B cell (primary cell): ENCODE measurements at regions of chr10 and their contacts with region 1.

Region 1: GRCh38 chr10:63157845-63158624 is 24.9 kb downstream of the NRBF2 start:
- DNase-seq: peak; percentile 85
- ATAC-seq: peak; percentile 68
- H3K4me3 ChIP-seq: no peak overlapping the region
- H3K4me3 Mint-ChIP-seq: no peak overlapping the region
- H3K27ac ChIP-seq: no peak overlapping the region
- H3K27ac Mint-ChIP-seq: no peak overlapping the region
- H3K4me1 ChIP-seq: no peaks in the 10 kb centered on the region
- H3K4me1 Mint-ChIP-seq: peaks cover 9% of the 10 kb centered on the region
- H3K27me3 ChIP-seq: no peaks in the 10 kb centered on the region
- H3K27me3 Mint-ChIP-seq: no peaks in the 10 kb centered on the region
- CTCF ChIP-seq: peak; percentile 90

Region 2: DNA sequence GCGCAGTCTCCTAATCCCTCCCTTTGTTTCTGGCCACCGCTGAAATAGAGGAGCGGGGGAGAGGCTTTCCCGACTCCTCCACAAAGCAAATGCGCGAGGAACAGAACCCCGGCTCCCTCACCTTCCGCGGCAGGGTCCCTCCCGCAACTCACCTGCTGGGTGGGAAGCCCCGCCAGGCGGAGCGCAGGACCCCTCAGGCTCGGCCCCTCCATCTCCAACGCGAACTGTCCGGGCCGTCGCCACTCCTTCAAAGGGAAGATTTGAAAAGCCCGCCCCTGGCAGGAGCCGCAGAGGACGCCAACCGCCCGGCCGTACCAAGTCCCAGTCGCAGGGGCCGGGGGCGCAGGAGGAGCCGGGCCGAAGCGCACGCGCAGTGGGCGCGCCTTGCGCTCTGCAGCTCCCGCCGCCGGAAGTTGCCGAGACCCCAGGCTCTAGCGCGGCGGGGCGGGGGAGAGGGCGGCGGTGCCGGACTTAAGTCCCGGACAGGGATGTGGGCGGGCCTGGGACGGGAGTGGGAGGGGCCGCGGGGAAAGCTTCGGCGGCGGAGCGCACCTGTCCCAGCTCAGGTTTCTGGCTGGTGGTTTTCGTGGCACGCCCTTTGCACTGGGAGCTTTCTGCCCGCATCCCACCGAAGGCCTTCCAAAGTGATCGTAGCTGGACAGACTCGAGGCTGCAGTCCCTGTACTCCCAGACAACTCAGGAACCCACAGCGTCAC is 889.5 kb before region 1 on chr10 and contains the start of gene RTKN2:
- CTCF ChIA-PET with region 1: interaction called, 22 read pairs
- POLR2A ChIA-PET with region 1: no interaction called
- intact Hi-C with region 1: loop called (anchors 1 kb)
- DNase-seq: peak; percentile 81
- ATAC-seq: peak; percentile 90
- H3K4me3 ChIP-seq: peak within 1 kb of the TSS; percentile 51 to 73 (median 68)
- H3K4me3 Mint-ChIP-seq: peak within 1 kb of the TSS; percentile 92
- H3K27ac ChIP-seq: peak within 1 kb of the TSS in 1 of 2 donors; percentile 25
- H3K27ac Mint-ChIP-seq: no peak within 1 kb of the TSS
- H3K4me1 ChIP-seq: peaks cover 14 to 15% of the 10 kb centered on the region in 2 donors
- H3K4me1 Mint-ChIP-seq: peaks cover 11% of the 10 kb centered on the region
- H3K27me3 ChIP-seq: peaks cover 0 to 17% (median 9%) of the 10 kb centered on the region in 4 experiments
- H3K27me3 Mint-ChIP-seq: peaks cover 14% of the 10 kb centered on the region
- CTCF ChIP-seq: no peak
- total RNA-seq, gene RTKN2: 0.22 and 0.53 TPM in 2 replicates

Region 3: GRCh38 chr10:62594093-62594520 is 563.9 kb before region 1 on chr10:
- CTCF ChIA-PET with region 1: interaction called, 21 read pairs
- POLR2A ChIA-PET with region 1: no interaction called
- intact Hi-C with region 1: loop called (anchors 1 kb)
- DNase-seq: peak; percentile 74
- ATAC-seq: peak; percentile 89
- H3K4me3 ChIP-seq: no peak overlapping the region
- H3K4me3 Mint-ChIP-seq: no peak overlapping the region
- H3K27ac ChIP-seq: no peak overlapping the region
- H3K27ac Mint-ChIP-seq: no peak overlapping the region
- H3K4me1 ChIP-seq: peaks cover 7 to 10% of the 10 kb centered on the region in 2 donors
- H3K4me1 Mint-ChIP-seq: peaks cover 7% of the 10 kb centered on the region
- H3K27me3 ChIP-seq: no peaks in the 10 kb centered on the region
- H3K27me3 Mint-ChIP-seq: no peaks in the 10 kb centered on the region
- CTCF ChIP-seq: peak; percentile 88

Region 4: DNA sequence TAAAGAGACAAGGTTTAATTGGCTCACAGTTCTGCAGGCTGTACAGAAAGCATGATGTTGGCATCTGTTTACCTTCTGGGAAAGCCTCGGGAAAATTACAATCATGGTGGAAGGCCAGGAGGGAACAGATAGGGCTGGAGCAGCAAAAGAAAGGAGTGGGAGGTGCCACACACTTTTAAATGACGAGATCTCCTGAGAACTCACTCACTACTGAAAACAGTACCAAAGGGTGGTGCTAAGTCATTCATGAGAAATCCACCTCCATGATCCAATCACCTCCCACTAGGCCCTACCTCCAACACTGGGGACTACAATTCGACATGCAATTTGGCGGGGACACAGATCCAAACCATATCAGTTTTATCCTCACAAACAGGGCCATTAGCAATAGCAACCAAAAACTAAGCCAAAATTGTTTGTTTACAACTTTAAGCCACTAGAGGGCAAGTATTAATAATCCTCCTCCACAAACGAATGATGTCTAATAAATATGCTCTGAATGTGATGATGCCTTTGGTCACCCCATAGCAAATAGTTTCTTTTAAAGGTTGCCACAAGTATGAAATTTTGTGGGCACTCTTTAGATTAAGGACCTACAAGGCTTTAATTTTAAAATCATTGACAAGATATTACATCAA is 154.1 kb before region 1 on chr10:
- CTCF ChIA-PET with region 1: interaction called, 4 read pairs
- POLR2A ChIA-PET with region 1: no interaction called
- intact Hi-C with region 1: loop called (anchors 1 kb)
- DNase-seq: peak; percentile 14
- ATAC-seq: no peak
- H3K4me3 ChIP-seq: no peak overlapping the region
- H3K4me3 Mint-ChIP-seq: no peak overlapping the region
- H3K27ac ChIP-seq: no peak overlapping the region
- H3K27ac Mint-ChIP-seq: no peak overlapping the region
- H3K4me1 ChIP-seq: no peaks in the 10 kb centered on the region
- H3K4me1 Mint-ChIP-seq: no peaks in the 10 kb centered on the region
- H3K27me3 ChIP-seq: no peaks in the 10 kb centered on the region
- H3K27me3 Mint-ChIP-seq: peaks cover 9% of the 10 kb centered on the region
- CTCF ChIP-seq: peak; percentile 60

Region 5: DNA sequence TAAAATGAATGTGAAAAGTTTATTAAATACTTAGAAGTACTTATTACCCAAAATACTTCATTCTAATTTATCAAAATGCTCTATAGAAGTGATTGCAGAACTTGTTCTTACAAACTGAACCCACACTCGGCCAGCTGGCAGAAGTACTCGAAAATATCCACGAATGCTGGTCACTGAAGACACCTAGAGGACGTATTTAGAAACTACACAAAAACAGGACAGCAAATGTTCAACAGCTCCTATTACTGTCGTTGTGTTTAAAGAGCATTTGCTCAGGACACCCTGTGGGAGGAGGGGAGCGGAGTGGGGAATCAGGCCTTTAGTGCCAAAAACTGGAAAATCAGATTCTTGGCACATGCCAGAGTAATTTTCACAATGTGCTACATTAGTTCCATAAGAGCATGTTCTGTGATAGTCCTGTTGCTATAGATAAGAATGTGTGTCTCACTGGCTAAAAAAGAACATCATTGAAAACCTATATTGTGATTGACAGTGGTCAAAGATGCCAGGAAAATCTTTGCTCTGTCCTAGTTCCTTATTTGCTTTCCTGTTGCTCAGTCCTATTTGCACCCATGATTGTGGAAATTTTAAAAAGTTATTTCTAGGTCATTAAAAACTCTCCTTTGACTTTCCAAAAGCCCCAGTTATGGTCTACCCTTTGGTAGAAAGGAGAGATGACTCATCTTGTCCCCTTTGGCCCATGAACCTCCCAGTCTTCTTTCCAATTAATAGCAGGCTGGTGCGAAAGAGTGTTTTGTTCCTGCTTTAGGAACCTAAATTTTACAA is 73.9 kb before region 1 on chr10:
- CTCF ChIA-PET with region 1: interaction called, 27 read pairs
- POLR2A ChIA-PET with region 1: no interaction called
- intact Hi-C with region 1: loop called (anchors 1 kb)
- DNase-seq: peak; percentile 75
- ATAC-seq: peak; percentile 86
- H3K4me3 ChIP-seq: no peak overlapping the region
- H3K4me3 Mint-ChIP-seq: no peak overlapping the region
- H3K27ac ChIP-seq: no peak overlapping the region
- H3K27ac Mint-ChIP-seq: no peak overlapping the region
- H3K4me1 ChIP-seq: no peaks in the 10 kb centered on the region
- H3K4me1 Mint-ChIP-seq: no peaks in the 10 kb centered on the region
- H3K27me3 ChIP-seq: no peaks in the 10 kb centered on the region
- H3K27me3 Mint-ChIP-seq: peaks cover 10% of the 10 kb centered on the region
- CTCF ChIP-seq: peak; percentile 82

Region 6: GRCh38 chr10:63133056-63133820 is 24.8 kb before region 1 on chr10 and contains the start of gene NRBF2:
- CTCF ChIA-PET with region 1: interaction called, 35 read pairs
- POLR2A ChIA-PET with region 1: no interaction called
- intact Hi-C with region 1: no loop called
- DNase-seq: peak; percentile 99
- ATAC-seq: peak; percentile 86
- H3K4me3 ChIP-seq: peak within 1 kb of the TSS; percentile 89 to 100 (median 95)
- H3K4me3 Mint-ChIP-seq: peak within 1 kb of the TSS; percentile 93
- H3K27ac ChIP-seq: peak within 1 kb of the TSS; percentile 99
- H3K27ac Mint-ChIP-seq: peak within 1 kb of the TSS; percentile 97
- H3K4me1 ChIP-seq: peaks cover 26 to 36% of the 10 kb centered on the region in 2 donors
- H3K4me1 Mint-ChIP-seq: peaks cover 43% of the 10 kb centered on the region
- H3K27me3 ChIP-seq: peaks cover 0 to 2% (median 0%) of the 10 kb centered on the region in 4 experiments
- H3K27me3 Mint-ChIP-seq: peaks cover 3% of the 10 kb centered on the region
- CTCF ChIP-seq: peak; percentile 39
- total RNA-seq, gene NRBF2: 20.5 and 24.6 TPM in 2 replicates

Region 7: DNA sequence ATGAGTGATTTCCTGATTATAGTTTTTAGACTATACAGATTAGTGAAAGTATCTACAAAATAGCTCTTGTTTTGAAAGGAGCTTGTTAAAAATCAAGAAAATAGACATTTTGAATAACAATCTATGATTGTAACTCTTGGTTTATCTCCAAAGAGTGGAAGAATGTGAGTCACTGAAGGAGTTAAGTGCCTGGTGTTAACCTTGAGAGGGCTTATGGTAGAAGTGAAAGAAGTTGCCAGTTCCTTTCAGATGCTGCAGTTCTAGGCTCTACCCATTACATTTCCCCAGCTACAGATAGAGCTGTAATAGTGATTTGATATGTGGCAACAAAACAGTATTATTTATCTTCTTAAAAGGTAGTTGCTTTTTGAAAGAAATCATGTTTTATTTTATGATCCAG is 12.3 kb before region 1 on chr10:
- CTCF ChIA-PET with region 1: interaction called, 56 read pairs
- POLR2A ChIA-PET with region 1: no interaction called
- intact Hi-C with region 1: no loop called
- DNase-seq: no peak
- ATAC-seq: no peak
- H3K4me3 ChIP-seq: no peak overlapping the region
- H3K4me3 Mint-ChIP-seq: no peak overlapping the region
- H3K27ac ChIP-seq: no peak overlapping the region
- H3K27ac Mint-ChIP-seq: no peak overlapping the region
- H3K4me1 ChIP-seq: peaks cover 0 to 8% of the 10 kb centered on the region in 2 donors
- H3K4me1 Mint-ChIP-seq: peaks cover 50% of the 10 kb centered on the region
- H3K27me3 ChIP-seq: no peaks in the 10 kb centered on the region
- H3K27me3 Mint-ChIP-seq: no peaks in the 10 kb centered on the region
- CTCF ChIP-seq: no peak

Region 8: DNA sequence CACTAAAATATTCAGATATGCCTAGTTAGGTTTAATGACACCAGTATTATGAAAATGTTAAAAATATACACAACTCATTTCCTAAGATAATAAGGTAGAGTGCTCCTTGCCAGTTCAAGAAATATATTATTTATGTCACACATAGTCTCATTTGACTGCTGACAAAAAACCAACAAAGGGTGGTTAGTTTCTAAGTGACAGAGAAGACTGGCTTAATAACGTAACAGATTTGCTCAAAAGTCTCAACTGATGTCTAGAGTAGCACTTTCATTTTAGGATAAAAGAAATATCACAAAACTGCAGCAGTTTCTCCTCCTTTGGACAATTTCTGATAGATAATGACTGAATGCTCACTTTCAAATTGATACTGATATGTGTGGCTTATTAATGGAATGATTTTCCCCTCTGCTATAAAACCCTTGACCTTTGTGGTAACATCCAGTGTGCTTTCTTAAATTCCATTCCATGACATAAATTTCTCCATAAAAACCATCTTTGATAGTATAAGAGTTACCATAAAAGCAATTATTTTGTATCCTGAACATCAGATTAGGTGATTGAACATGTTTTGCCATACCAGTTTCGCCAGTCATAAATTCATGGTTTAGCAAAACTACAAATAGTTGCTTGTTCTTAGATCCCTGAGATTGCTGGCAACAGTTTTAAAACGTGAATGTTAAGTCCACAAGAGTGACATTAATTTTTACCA is 69.3 kb after region 1 on chr10:
- CTCF ChIA-PET with region 1: no interaction called
- POLR2A ChIA-PET with region 1: no interaction called
- intact Hi-C with region 1: no loop called
- DNase-seq: no peak
- ATAC-seq: no peak
- H3K4me3 ChIP-seq: no peak overlapping the region
- H3K4me3 Mint-ChIP-seq: no peak overlapping the region
- H3K27ac ChIP-seq: peak overlapping the region; percentile 1 to 3
- H3K27ac Mint-ChIP-seq: peak overlapping the region; percentile 65
- H3K4me1 ChIP-seq: peaks cover 18 to 32% of the 10 kb centered on the region in 2 donors
- H3K4me1 Mint-ChIP-seq: peaks cover 65% of the 10 kb centered on the region
- H3K27me3 ChIP-seq: no peaks in the 10 kb centered on the region
- H3K27me3 Mint-ChIP-seq: no peaks in the 10 kb centered on the region
- CTCF ChIP-seq: no peak

Region 9: GRCh38 chr10:63267414-63268148 is 109.5 kb after region 1 on chr10:
- CTCF ChIA-PET with region 1: no interaction called
- POLR2A ChIA-PET with region 1: no interaction called
- intact Hi-C with region 1: no loop called
- DNase-seq: peak; percentile 51
- ATAC-seq: no peak
- H3K4me3 ChIP-seq: peak overlapping the region; percentile 64 to 100 (median 95)
- H3K4me3 Mint-ChIP-seq: peak overlapping the region; percentile 100
- H3K27ac ChIP-seq: peak overlapping the region; percentile 85 to 94
- H3K27ac Mint-ChIP-seq: peak overlapping the region; percentile 86
- H3K4me1 ChIP-seq: peaks cover 3 to 12% of the 10 kb centered on the region in 2 donors
- H3K4me1 Mint-ChIP-seq: peaks cover 27% of the 10 kb centered on the region
- H3K27me3 ChIP-seq: no peaks in the 10 kb centered on the region
- H3K27me3 Mint-ChIP-seq: no peaks in the 10 kb centered on the region
- CTCF ChIP-seq: no peak